GM10248 (cell line): ENCODE measurements at regions of chr2 and their contacts with region 1.

Region 1: GRCh38 chr2:205925373-205926337 is 160.3 kb downstream of the INO80D start:
- DNase-seq: peak; percentile 80
- CTCF ChIP-seq: peak; percentile 87

Region 2: DNA sequence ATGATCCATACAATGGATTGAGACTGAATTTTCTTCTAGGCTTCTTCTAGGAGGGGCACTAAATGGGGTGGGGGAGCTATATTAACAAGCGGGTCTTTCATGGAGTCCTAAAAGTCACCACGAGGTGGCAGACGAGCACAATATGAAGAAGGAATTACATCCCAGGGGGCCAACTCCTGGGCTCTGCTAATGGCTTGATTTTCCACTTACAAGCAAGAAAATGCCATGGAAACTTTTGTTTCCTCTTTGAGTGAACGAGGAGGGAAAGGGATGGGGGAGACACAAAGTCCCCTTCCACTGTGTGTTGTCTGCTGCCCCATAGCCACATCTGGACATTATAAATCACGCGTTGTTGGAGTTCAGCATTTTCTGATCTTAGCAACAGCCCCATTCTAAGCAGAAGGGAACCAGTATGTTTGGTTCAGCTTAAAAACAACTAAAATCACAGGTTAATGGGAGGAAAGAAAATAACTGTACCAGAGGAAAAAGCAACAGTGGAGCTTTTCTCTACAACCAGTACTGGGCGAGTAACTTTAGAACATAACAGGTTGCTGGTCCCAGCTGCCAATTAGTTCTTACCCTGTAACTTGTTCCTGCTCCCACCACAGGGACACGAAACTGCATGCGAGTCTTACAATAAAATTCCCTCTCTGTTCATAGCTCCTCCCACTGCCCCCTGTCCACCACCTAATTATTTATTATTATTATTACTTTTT is 1665.3 kb before region 1 on chr2:
- CTCF ChIA-PET with region 1: interaction called, 11 read pairs
- POLR2A ChIA-PET with region 1: no interaction called
- DNase-seq: peak; percentile 29
- CTCF ChIP-seq: peak; percentile 42

Region 3: DNA sequence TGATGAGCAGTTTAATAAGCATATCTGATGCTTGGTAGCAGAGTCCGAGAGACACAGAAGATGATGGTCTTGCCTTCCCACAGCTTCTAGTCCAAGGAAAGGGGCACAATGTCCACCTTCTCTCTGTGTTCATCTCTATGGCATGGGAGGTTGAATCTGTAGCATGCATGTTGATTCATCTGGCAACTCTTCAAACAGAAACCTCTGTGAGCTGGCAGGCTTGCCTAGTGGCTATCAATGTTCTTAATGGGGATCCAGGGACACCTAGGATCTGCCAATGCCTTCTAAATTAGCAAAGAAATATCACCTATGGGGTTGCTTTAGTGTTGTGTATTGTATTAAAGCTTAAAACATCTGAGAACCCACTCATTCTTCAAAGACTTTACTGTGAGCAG is 10.5 kb before region 1 on chr2:
- CTCF ChIA-PET with region 1: interaction called, 13 read pairs
- POLR2A ChIA-PET with region 1: no interaction called
- DNase-seq: no peak
- CTCF ChIP-seq: no peak